ENCODE measurements at regions of chr9 and their contacts with region 1.

Region 1: GRCh38 chr9:19456996-19457692 is 48.3 kb downstream of the ACER2 start:
- DNase-seq: peak; percentile 65
- H3K4me3 ChIP-seq: no peak overlapping the region
- H3K27ac ChIP-seq: no peak overlapping the region
- H3K4me1 ChIP-seq: no peaks in the 10 kb centered on the region
- H3K27me3 ChIP-seq: no peaks in the 10 kb centered on the region
- CTCF ChIP-seq: peak; percentile 94 to 95

Region 2: DNA sequence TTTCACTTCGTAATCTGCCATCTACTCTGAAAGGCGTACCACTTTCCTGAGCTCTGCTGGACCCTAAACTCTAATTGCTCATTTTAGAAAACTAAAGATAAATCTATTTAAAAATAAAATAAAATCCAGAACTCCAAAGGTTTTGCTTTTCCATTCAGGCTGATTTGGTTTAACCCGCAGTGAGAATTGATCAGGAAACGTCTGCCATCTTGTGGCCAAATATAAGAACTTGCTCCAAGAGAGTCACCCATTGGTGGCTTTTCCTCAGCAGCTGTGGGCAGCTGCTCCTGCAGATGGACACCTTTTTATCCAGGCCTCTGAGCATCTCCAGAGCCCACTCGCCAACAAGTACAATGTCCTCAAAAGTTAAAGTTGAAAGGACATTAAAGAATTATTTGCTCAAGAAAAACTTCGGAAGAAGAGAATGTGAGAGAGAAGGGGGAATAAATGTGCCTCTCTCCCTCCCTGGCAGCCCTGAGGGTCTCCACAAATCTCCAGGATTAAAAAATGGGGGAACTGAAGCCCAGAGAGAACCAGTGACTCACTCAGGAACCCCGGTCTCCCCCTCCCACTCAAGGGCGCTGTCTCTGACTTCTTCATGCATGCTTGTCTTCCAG is 428.2 kb before region 1 on chr9:
- CTCF ChIA-PET with region 1: no interaction called
- dilution Hi-C with region 1: no loop called
- in situ Hi-C with region 1: no loop called
- intact Hi-C with region 1: loop called (anchors 5 kb)
- DNase-seq: peak; percentile 40
- H3K4me3 ChIP-seq: no peak overlapping the region
- H3K27ac ChIP-seq: no peak overlapping the region
- H3K4me1 ChIP-seq: no peaks in the 10 kb centered on the region
- H3K27me3 ChIP-seq: no peaks in the 10 kb centered on the region
- CTCF ChIP-seq: peak; percentile 58 to 72

Region 3: DNA sequence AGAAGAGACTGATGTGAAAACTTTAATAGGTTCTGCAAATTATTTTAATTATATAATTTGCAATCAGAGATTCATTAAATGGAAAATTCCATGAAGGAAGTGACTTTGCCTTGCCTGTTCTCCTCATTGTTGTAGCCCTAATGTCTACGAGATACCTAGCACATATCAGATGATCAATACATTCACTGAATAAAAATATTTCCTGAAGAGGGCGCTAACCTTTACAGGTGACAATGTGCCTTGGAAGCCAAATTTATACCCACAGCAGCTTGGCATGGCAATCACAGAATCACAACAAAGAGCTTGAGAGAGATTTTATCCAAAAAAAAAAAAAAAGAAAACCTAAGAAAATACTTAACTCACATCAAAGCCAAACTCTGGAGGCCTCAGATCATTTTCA is 371.8 kb before region 1 on chr9:
- CTCF ChIA-PET with region 1: interaction called, 7 read pairs
- dilution Hi-C with region 1: no loop called
- in situ Hi-C with region 1: no loop called
- intact Hi-C with region 1: loop called (anchors 5 kb)
- DNase-seq: no peak
- H3K4me3 ChIP-seq: no peak overlapping the region
- H3K27ac ChIP-seq: no peak overlapping the region
- H3K4me1 ChIP-seq: peaks cover 9% of the 10 kb centered on the region
- H3K27me3 ChIP-seq: no peaks in the 10 kb centered on the region
- CTCF ChIP-seq: peak; percentile 47

Region 4: GRCh38 chr9:19174127-19174912 is 282.8 kb before region 1 on chr9:
- CTCF ChIA-PET with region 1: no interaction called
- dilution Hi-C with region 1: no loop called
- in situ Hi-C with region 1: no loop called
- intact Hi-C with region 1: loop called (anchors 2 kb)
- DNase-seq: peak; percentile 78
- H3K4me3 ChIP-seq: no peak overlapping the region
- H3K27ac ChIP-seq: peak overlapping the region; percentile 31
- H3K4me1 ChIP-seq: no peaks in the 10 kb centered on the region
- H3K27me3 ChIP-seq: no peaks in the 10 kb centered on the region
- CTCF ChIP-seq: peak; percentile 32 to 61

Region 5: DNA sequence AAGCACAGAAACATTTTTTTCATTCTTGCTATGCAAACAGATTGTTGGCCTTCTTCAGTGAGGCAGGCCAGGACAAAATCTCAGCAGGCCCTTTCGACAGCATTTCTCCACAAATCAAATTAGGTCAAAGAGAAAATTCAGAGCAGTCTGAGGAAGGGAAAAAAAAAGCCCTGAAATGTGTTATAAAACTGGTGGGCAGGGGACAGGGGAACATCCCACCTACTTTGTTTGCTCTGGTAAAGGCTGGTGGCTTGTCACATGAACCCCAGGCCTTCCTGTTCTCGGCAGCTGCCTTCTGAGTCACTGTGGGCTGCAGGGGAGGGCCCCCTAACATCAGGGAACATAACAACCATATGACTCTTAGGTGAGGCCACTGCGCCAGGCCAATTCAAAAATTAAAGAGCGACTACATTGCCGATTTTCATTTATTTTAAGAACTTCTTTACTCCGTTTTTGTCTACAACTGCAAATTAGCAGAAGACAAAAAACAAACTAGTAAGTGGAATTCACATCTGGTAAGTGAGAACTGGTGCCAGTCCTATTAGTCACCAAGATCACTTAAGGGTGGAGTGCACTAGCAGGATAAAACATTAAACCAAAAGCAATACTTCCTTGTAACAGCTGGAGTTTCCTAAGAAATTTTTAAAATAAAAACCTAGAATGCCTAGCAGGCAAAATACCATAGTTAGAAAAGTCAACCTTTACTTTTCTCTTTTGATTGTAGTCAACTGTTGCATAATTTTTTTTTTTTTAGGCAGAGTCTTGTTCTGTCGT is 272.8 kb before region 1 on chr9:
- CTCF ChIA-PET with region 1: no interaction called
- dilution Hi-C with region 1: no loop called
- in situ Hi-C with region 1: no loop called
- intact Hi-C with region 1: loop called (anchors 2 kb)
- DNase-seq: peak; percentile 75
- H3K4me3 ChIP-seq: peak overlapping the region in 1 of 3 experiments; percentile 11
- H3K27ac ChIP-seq: peak overlapping the region; percentile 94
- H3K4me1 ChIP-seq: peaks cover 12% of the 10 kb centered on the region
- H3K27me3 ChIP-seq: no peaks in the 10 kb centered on the region
- CTCF ChIP-seq: no peak

Region 6: GRCh38 chr9:19230356-19231125 is 226.6 kb before region 1 on chr9 and contains the start of gene DENND4C:
- CTCF ChIA-PET with region 1: no interaction called
- dilution Hi-C with region 1: no loop called
- in situ Hi-C with region 1: no loop called
- intact Hi-C with region 1: loop called (anchors 1 kb)
- DNase-seq: peak; percentile 85
- H3K4me3 ChIP-seq: peak within 1 kb of the TSS; percentile 74 to 100 (median 94)
- H3K27ac ChIP-seq: peak within 1 kb of the TSS; percentile 91
- H3K4me1 ChIP-seq: peaks cover 9% of the 10 kb centered on the region
- H3K27me3 ChIP-seq: no peaks in the 10 kb centered on the region
- CTCF ChIP-seq: no peak
- total RNA-seq, gene DENND4C: 28.5 to 65.0 TPM

Region 7: GRCh38 chr9:19252174-19252884 is 204.8 kb before region 1 on chr9:
- CTCF ChIA-PET with region 1: no interaction called
- dilution Hi-C with region 1: no loop called
- in situ Hi-C with region 1: no loop called
- intact Hi-C with region 1: no loop called
- DNase-seq: no peak
- H3K4me3 ChIP-seq: no peak overlapping the region
- H3K27ac ChIP-seq: no peak overlapping the region
- H3K4me1 ChIP-seq: no peaks in the 10 kb centered on the region
- H3K27me3 ChIP-seq: no peaks in the 10 kb centered on the region
- CTCF ChIP-seq: no peak

Region 8: GRCh38 chr9:19379697-19380046 is 77.5 kb before region 1 on chr9:
- CTCF ChIA-PET with region 1: no interaction called
- dilution Hi-C with region 1: no loop called
- in situ Hi-C with region 1: loop called in 1 of 2 experiments (anchors 10 kb)
- intact Hi-C with region 1: loop called (anchors 1 kb)
- DNase-seq: no peak
- H3K4me3 ChIP-seq: peak overlapping the region; percentile 59 to 72 (median 60)
- H3K27ac ChIP-seq: peak overlapping the region; percentile 77
- H3K4me1 ChIP-seq: peaks cover 15% of the 10 kb centered on the region
- H3K27me3 ChIP-seq: no peaks in the 10 kb centered on the region
- CTCF ChIP-seq: no peak